ENCODE measurements at regions of chr12 and their contacts with region 1.

Region 1: GRCh38 chr12:103768467-103769123 is 72.4 kb downstream of the NT5DC3 start:
- DNase-seq: no peak
- H3K4me3 ChIP-seq: no peak overlapping the region
- H3K27ac ChIP-seq: no peak overlapping the region
- H3K4me1 ChIP-seq: no peaks in the 10 kb centered on the region
- H3K27me3 ChIP-seq: no peaks in the 10 kb centered on the region
- CTCF ChIP-seq: no peak
- POLR2A ChIP-seq: no peak

Region 2: GRCh38 chr12:103728323-103728722 is 40.3 kb before region 1 on chr12:
- intact Hi-C with region 1: no loop called
- DNase-seq: no peak
- H3K4me3 ChIP-seq: no peak overlapping the region
- H3K27ac ChIP-seq: no peak overlapping the region
- H3K4me1 ChIP-seq: no peaks in the 10 kb centered on the region
- H3K27me3 ChIP-seq: no peaks in the 10 kb centered on the region
- CTCF ChIP-seq: no peak
- POLR2A ChIP-seq: no peak

Region 3: GRCh38 chr12:104109446-104110271 is 341.1 kb after region 1 on chr12:
- intact Hi-C with region 1: loop called (anchors 10 kb)
- DNase-seq: no peak
- H3K4me3 ChIP-seq: no peak overlapping the region
- H3K27ac ChIP-seq: no peak overlapping the region
- H3K4me1 ChIP-seq: no peaks in the 10 kb centered on the region
- H3K27me3 ChIP-seq: no peaks in the 10 kb centered on the region
- CTCF ChIP-seq: no peak
- POLR2A ChIP-seq: no peak

Measured in breast epithelium (tissue), 4 donors.